ENCODE measurements at regions of chr20 and their contacts with region 1.

Region 1: DNA sequence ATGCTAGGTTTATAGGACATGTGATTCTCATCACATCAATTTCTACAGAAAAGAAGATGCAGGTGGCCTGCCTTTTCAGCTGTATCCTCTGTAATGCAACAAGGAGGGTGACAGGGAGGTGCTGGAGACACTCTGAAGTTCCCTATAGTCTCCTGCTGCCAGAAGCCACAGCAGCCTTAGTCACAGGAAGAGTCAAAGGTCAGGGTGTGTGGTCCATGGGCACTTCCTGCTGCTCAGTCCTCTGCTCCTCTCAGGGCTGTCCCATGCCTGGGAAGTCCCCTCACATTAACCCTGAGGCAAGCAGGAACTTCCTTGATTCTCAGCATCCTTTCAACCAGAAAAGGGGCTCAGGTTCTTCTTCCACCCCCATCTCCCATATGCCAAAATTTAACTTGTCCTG is 144.8 kb upstream of the FOXA2 start:
- DNase-seq: no peak
- H3K4me3 Mint-ChIP-seq: no peak overlapping the region
- H3K27ac Mint-ChIP-seq: no peak overlapping the region
- H3K4me1 Mint-ChIP-seq: peaks cover 7% of the 10 kb centered on the region
- H3K27me3 Mint-ChIP-seq: no peaks in the 10 kb centered on the region
- CTCF ChIP-seq: no peak

Region 2: GRCh38 chr20:22716821-22717351 is 12.3 kb before region 1 on chr20:
- CTCF ChIA-PET with region 1: interaction called, 10 read pairs
- POLR2A ChIA-PET with region 1: no interaction called
- intact Hi-C with region 1: no loop called
- DNase-seq: no peak
- H3K4me3 Mint-ChIP-seq: no peak overlapping the region
- H3K27ac Mint-ChIP-seq: peak overlapping the region; percentile 10
- H3K4me1 Mint-ChIP-seq: peaks cover 16% of the 10 kb centered on the region
- H3K27me3 Mint-ChIP-seq: no peaks in the 10 kb centered on the region
- CTCF ChIP-seq: no peak

Region 3: DNA sequence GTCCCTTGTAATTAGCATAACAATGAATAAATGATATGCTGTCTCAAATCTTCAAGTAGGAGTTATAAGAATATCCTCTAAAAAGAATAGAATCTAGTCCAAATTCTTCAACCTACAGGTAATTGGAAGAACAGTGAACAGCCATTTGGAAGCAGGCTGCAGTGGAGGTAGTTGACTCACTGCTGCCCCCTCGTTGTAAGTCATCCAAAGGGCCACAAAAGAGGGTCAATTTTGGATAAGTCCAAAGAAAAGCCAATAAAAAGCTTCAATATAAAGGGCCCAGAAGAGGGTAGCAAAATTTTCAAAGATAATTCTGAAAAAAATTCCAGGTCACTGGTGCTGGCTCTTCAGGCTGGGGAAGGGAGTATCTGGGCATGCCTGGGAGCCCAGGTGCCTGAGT is 245.2 kb after region 1 on chr20:
- CTCF ChIA-PET with region 1: interaction called, 12 read pairs
- POLR2A ChIA-PET with region 1: no interaction called
- intact Hi-C with region 1: loop called (anchors 1 kb)
- DNase-seq: peak; percentile 53
- H3K4me3 Mint-ChIP-seq: no peak overlapping the region
- H3K27ac Mint-ChIP-seq: no peak overlapping the region
- H3K4me1 Mint-ChIP-seq: no peaks in the 10 kb centered on the region
- H3K27me3 Mint-ChIP-seq: no peaks in the 10 kb centered on the region
- CTCF ChIP-seq: peak; percentile 61

Region 4: DNA sequence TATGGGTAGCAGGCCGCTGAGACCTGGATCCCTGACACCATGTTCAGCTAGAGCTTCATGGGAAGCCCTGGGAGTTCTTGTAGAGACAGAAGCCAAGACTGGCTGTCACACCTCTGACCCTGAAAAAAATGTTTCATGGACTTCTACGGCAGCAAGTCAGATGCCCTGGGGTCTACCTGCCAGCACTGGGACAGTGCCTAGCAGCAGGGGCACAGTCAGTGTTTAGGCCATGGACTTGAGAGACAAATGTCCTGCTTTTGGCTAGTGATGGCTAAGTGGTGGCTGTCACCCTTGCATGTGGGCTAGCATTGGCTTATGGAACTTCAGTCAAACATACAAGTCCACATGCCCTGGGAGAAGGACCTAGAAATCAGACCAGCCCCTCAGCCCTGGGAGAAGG is 264.6 kb after region 1 on chr20:
- CTCF ChIA-PET with region 1: no interaction called
- POLR2A ChIA-PET with region 1: no interaction called
- intact Hi-C with region 1: no loop called
- DNase-seq: no peak
- H3K4me3 Mint-ChIP-seq: no peak overlapping the region
- H3K27ac Mint-ChIP-seq: no peak overlapping the region
- H3K4me1 Mint-ChIP-seq: no peaks in the 10 kb centered on the region
- H3K27me3 Mint-ChIP-seq: no peaks in the 10 kb centered on the region
- CTCF ChIP-seq: no peak

Region 5: DNA sequence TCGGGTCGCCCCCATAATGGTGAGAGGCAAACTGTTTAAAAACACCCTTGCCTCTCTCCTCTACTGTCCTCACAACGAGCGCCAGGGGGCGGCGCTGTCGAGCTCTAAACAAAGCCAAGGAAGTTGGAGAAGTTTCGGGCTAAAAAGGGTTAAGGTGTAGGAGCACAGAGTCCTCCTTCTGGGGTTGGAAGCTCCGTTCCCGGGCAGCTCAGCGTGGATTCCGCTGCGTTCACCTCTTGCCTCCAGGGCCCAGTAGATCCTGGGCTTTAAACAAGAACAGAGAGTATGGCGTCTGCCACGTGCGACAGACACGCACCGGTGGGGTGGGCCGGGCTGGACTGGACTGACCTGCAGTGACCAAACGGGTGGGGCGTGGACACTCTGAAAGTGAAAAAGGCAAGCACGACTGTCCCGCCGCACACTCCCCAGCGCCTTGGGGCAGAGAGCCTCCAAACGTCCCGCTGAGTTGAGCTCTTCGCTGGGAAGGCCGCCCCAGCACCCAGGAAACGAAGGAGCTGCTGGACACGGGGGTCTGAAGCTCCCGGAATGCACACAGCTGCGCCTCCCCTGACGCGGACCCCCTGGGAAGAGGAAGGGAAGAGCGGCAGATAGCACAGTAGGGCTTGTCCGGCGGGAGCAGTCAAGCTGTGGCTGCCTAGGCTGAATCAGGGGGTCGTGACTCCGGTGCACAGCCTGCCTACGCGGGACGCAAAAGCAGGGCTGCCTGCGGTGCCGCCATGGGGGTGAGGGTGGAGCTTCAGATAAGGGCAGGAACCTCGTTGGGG is 321.9 kb after region 1 on chr20:
- CTCF ChIA-PET with region 1: interaction called, 7 read pairs
- POLR2A ChIA-PET with region 1: no interaction called
- intact Hi-C with region 1: loop called (anchors 1 kb)
- DNase-seq: peak; percentile 92
- H3K4me3 Mint-ChIP-seq: peak overlapping the region; percentile 74
- H3K27ac Mint-ChIP-seq: peak overlapping the region; percentile 92
- H3K4me1 Mint-ChIP-seq: peaks cover 17% of the 10 kb centered on the region
- H3K27me3 Mint-ChIP-seq: no peaks in the 10 kb centered on the region
- CTCF ChIP-seq: peak; percentile 78

Region 6: DNA sequence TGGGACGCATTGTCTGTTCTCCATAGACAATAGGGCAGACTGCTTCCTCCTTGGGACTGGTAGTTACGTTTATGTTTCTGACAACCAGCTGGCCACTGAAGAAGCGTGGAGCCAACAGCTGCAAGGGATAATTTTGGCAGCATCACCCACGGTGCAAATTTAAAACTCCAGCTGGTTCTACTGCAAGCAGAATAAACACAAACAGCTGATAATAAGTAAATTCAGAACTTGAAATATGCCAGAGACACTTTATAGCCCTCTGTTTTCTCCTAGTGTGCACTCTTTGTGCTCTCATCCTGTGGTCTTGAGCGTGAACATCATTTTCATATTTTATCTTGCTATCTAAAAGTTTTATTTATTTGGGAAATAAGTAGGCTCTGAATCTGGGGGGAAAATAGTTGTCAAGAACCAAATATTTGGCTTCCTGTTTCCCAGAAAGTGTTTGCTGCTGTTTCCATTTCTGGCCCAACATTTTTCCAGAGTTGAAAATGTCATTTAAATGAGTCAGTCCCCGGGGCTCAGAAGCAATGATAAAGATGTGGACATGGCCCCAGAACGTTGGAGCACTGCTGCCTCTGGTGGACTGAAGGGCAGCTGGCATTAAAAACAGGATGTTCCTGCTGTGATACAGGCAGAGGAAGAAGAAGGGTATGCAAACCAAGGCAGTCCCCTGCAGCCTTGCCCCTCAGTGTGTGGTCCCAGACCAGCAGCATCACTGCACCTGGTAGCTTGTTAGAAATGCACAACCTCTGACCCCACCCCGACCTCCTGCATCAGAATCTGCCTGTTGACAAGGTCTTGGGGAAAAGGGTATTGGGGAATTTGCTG is 332.8 kb after region 1 on chr20:
- CTCF ChIA-PET with region 1: interaction called, 11 read pairs
- POLR2A ChIA-PET with region 1: no interaction called
- intact Hi-C with region 1: no loop called
- DNase-seq: peak; percentile 50
- H3K4me3 Mint-ChIP-seq: no peak overlapping the region
- H3K27ac Mint-ChIP-seq: no peak overlapping the region
- H3K4me1 Mint-ChIP-seq: no peaks in the 10 kb centered on the region
- H3K27me3 Mint-ChIP-seq: no peaks in the 10 kb centered on the region
- CTCF ChIP-seq: no peak

Region 7: GRCh38 chr20:23340524-23340923 is 611.3 kb after region 1 on chr20:
- CTCF ChIA-PET with region 1: interaction called, 21 read pairs
- POLR2A ChIA-PET with region 1: interaction called, 6 read pairs
- intact Hi-C with region 1: loop called (anchors 1 kb)
- DNase-seq: peak; percentile 61
- H3K4me3 Mint-ChIP-seq: no peak overlapping the region
- H3K27ac Mint-ChIP-seq: no peak overlapping the region
- H3K4me1 Mint-ChIP-seq: no peaks in the 10 kb centered on the region
- H3K27me3 Mint-ChIP-seq: no peaks in the 10 kb centered on the region
- CTCF ChIP-seq: peak; percentile 62

Measured in MCF 10A (cell line).